ENCODE measurements at regions of chr1 and their contacts with region 1.

Region 1: GRCh38 chr1:6199298-6200187 is at the start of gene RPL22:
- DNase-seq: peak; percentile 98
- H3K4me3 ChIP-seq: peak within 1 kb of the TSS; percentile 78 to 90 (median 82)
- H3K27ac ChIP-seq: peak within 1 kb of the TSS; percentile 66
- H3K4me1 ChIP-seq: peaks cover 17% of the 10 kb centered on the region
- H3K27me3 ChIP-seq: no peaks in the 10 kb centered on the region
- CTCF ChIP-seq: no peak
- POLR2A ChIP-seq: peak; percentile 85
- total RNA-seq, gene RPL22: 343 and 372 TPM in 2 replicates

Region 2: DNA sequence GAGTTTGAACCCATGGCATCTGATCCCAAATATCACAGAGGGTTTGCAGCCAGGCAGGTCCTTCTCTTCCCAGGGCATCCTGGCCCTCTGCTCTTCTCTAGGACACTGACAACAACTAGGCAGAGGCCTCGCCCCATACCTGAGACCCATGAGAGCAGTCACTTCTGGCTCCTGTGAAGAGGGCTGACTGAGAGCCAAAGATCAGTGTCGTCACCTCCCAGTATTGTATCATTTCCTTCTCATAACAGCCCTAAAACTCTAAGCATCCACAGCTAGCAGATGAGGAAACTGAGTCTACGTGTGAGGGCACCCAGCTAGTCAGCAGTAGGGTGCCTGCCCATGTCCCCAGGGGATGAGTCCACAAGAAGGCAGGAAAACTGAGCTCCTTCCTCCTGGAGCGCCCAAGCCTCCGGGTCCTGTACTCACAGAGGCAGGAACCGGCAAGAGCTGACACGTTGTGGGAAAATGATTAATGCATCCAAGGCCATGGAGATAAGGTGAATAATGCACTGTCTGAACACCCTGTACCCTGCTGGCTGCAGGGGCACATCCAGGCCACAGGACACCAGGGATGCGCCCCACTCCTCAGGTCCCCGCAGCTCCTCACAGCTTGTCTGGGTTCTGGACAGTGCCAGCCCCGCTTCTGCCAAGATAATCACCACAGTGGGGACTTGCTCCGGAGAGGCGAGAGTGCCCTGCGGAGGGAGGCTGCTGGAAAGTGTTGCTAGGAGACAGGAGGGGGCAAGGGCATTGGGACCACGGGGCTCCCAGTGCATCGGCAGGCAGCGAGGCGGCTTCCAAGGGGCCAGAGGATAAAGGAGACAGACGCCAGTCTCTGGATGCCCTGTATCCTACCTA is 547.4 kb before region 1 on chr1:
- CTCF ChIA-PET with region 1: no interaction called
- POLR2A ChIA-PET with region 1: no interaction called
- dilution Hi-C with region 1: no loop called
- intact Hi-C with region 1: no loop called
- DNase-seq: no peak
- H3K4me3 ChIP-seq: no peak overlapping the region
- H3K27ac ChIP-seq: no peak overlapping the region
- H3K4me1 ChIP-seq: no peaks in the 10 kb centered on the region
- H3K27me3 ChIP-seq: no peaks in the 10 kb centered on the region
- CTCF ChIP-seq: no peak
- POLR2A ChIP-seq: no peak

Region 3: GRCh38 chr1:5992026-5992813 is 207.3 kb before region 1 on chr1 and contains the start of gene NPHP4:
- CTCF ChIA-PET with region 1: no interaction called
- POLR2A ChIA-PET with region 1: no interaction called
- dilution Hi-C with region 1: no loop called
- intact Hi-C with region 1: loop called (anchors 2 kb)
- DNase-seq: peak; percentile 100
- H3K4me3 ChIP-seq: peak within 1 kb of the TSS; percentile 64 to 83 (median 74)
- H3K27ac ChIP-seq: peak within 1 kb of the TSS; percentile 82
- H3K4me1 ChIP-seq: peaks cover 10% of the 10 kb centered on the region
- H3K27me3 ChIP-seq: no peaks in the 10 kb centered on the region
- CTCF ChIP-seq: no peak
- POLR2A ChIP-seq: no peak
- total RNA-seq, gene NPHP4: 9.9 and 11.7 TPM in 2 replicates

Region 4: DNA sequence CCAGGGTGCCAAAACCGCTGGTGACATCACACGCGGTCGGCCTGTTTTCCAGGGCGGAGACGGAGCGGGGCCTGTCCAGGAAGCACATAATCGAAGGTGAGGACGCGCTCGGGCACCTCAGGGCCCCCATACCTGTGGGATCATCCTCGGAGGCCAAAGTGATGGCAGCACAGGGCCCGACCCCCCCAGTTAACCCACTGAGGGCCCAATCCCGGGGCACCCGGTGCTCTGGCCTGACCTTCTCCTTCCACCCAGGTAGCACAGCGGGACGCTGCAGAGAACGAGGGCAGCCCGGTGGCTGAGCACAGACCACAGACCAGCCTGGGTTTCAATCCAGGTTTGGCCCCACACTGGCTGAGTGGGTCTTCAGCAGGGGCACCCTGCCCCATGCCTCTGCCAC is 110.6 kb before region 1 on chr1:
- CTCF ChIA-PET with region 1: no interaction called
- POLR2A ChIA-PET with region 1: no interaction called
- dilution Hi-C with region 1: no loop called
- intact Hi-C with region 1: no loop called
- DNase-seq: no peak
- H3K4me3 ChIP-seq: no peak overlapping the region
- H3K27ac ChIP-seq: no peak overlapping the region
- H3K4me1 ChIP-seq: no peaks in the 10 kb centered on the region
- H3K27me3 ChIP-seq: no peaks in the 10 kb centered on the region
- CTCF ChIP-seq: no peak
- POLR2A ChIP-seq: no peak

Region 5: GRCh38 chr1:6180212-6180575 is 19.3 kb before region 1 on chr1 and contains the start of gene CHD5:
- CTCF ChIA-PET with region 1: interaction called, 10 read pairs
- POLR2A ChIA-PET with region 1: no interaction called
- dilution Hi-C with region 1: no loop called
- intact Hi-C with region 1: loop called (anchors 2 kb)
- DNase-seq: no peak
- H3K4me3 ChIP-seq: no peak within 1 kb of the TSS
- H3K27ac ChIP-seq: no peak within 1 kb of the TSS
- H3K4me1 ChIP-seq: no peaks in the 10 kb centered on the region
- H3K27me3 ChIP-seq: peaks cover 27 to 36% of the 10 kb centered on the region in 2 experiments
- CTCF ChIP-seq: peak in 1 of 2 donors; percentile 14
- POLR2A ChIP-seq: no peak
- total RNA-seq, gene CHD5: 0.11 and 0.14 TPM in 2 replicates

Region 6: GRCh38 chr1:6185635-6186382 is 13.7 kb before region 1 on chr1:
- CTCF ChIA-PET with region 1: interaction called, 15 read pairs
- POLR2A ChIA-PET with region 1: no interaction called
- dilution Hi-C with region 1: no loop called
- intact Hi-C with region 1: loop called (anchors 2 kb)
- DNase-seq: peak; percentile 26
- H3K4me3 ChIP-seq: no peak overlapping the region
- H3K27ac ChIP-seq: no peak overlapping the region
- H3K4me1 ChIP-seq: no peaks in the 10 kb centered on the region
- H3K27me3 ChIP-seq: peaks cover 10 to 11% of the 10 kb centered on the region in 2 experiments
- CTCF ChIP-seq: peak; percentile 43 to 44
- POLR2A ChIP-seq: no peak

Region 7: DNA sequence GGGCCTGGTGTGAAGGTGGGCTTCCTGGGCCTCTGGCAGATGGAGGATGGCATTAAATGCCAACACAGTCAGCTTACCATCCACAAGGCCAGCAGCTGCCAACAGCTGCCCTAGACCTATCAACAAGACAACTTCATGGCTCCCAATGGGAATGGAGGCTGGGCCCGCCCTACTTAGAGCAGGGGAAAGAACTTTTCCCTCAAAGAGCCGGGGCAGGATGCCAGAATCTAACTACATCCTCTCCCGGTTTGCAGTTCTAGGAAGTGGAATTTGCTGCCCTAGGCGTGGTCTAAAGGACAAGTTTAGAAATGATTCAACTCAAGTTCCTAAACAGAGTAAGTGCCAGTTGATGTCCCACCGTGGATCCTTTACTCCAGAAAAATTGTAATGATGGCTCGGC is 23.1 kb after region 1 on chr1:
- CTCF ChIA-PET with region 1: interaction called, 17 read pairs
- POLR2A ChIA-PET with region 1: no interaction called
- dilution Hi-C with region 1: no loop called
- intact Hi-C with region 1: no loop called
- DNase-seq: no peak
- H3K4me3 ChIP-seq: no peak overlapping the region
- H3K27ac ChIP-seq: no peak overlapping the region
- H3K4me1 ChIP-seq: no peaks in the 10 kb centered on the region
- H3K27me3 ChIP-seq: no peaks in the 10 kb centered on the region
- CTCF ChIP-seq: no peak
- POLR2A ChIP-seq: no peak

Region 8: GRCh38 chr1:6235296-6235677 is 35.7 kb after region 1 on chr1:
- CTCF ChIA-PET with region 1: interaction called, 30 read pairs
- POLR2A ChIA-PET with region 1: no interaction called
- dilution Hi-C with region 1: no loop called
- intact Hi-C with region 1: loop called (anchors 1 kb)
- DNase-seq: no peak
- H3K4me3 ChIP-seq: peak overlapping the region; percentile 66 to 80 (median 68)
- H3K27ac ChIP-seq: peak overlapping the region; percentile 6
- H3K4me1 ChIP-seq: peaks cover 11% of the 10 kb centered on the region
- H3K27me3 ChIP-seq: peaks cover 8 to 9% of the 10 kb centered on the region in 2 experiments
- CTCF ChIP-seq: no peak
- POLR2A ChIP-seq: no peak

Region 9: GRCh38 chr1:6523566-6523965 is 324.0 kb after region 1 on chr1:
- CTCF ChIA-PET with region 1: no interaction called
- POLR2A ChIA-PET with region 1: no interaction called
- dilution Hi-C with region 1: no loop called
- intact Hi-C with region 1: no loop called
- DNase-seq: peak; percentile 47
- H3K4me3 ChIP-seq: no peak overlapping the region
- H3K27ac ChIP-seq: no peak overlapping the region
- H3K4me1 ChIP-seq: no peaks in the 10 kb centered on the region
- H3K27me3 ChIP-seq: no peaks in the 10 kb centered on the region
- CTCF ChIP-seq: peak; percentile 58 to 59
- POLR2A ChIP-seq: no peak

Measured in endothelial cell of umbilical vein (primary cell).